ENCODE measurements at regions of chr1 and their contacts with region 1.

Region 1: DNA sequence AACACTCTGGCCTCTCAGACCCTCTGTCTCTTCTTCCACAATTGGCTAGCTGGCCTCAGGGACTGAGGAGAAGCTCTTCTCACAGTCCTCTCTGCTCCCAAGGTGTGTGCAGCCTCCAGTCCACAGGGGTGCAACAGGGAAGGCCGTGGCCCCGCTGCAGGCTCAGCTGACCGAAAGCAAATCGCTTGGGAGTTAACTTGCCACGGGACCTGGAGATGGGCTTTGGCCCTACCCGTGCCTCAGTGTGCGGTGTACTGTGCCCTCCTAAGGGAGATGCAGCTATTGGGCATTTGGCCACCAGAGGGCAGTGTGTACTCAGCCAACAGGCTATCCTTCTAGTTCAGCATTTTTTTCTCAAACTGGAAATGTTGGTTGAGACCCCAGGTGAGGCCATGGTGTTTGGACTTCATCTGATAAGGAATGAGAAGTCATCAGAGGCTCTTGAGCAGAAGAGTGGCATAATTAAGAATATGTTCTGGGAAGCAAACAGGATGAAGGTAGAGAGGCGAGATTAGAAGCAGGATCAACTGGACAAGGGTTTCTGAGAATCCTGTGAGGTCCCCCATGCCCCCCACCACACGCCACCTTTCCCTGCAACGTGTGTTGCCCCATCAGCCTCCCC is 42.5 kb upstream of the TMEM125 start:
- DNase-seq: peak; percentile 90 to 93
- H3K4me3 ChIP-seq: no peak overlapping the region
- H3K27ac ChIP-seq: peak overlapping the region in 1 of 5 donors; percentile 42
- H3K4me1 ChIP-seq: peaks cover 7 to 41% (median 24%) of the 10 kb centered on the region in 4 donors
- H3K27me3 ChIP-seq: no peaks in the 10 kb centered on the region
- CTCF ChIP-seq: peak in 6 of 7 experiments; percentile 57 to 97 (median 90)
- EP300 ChIP-seq: no peak
- POLR2A ChIP-seq: no peak

Region 2: DNA sequence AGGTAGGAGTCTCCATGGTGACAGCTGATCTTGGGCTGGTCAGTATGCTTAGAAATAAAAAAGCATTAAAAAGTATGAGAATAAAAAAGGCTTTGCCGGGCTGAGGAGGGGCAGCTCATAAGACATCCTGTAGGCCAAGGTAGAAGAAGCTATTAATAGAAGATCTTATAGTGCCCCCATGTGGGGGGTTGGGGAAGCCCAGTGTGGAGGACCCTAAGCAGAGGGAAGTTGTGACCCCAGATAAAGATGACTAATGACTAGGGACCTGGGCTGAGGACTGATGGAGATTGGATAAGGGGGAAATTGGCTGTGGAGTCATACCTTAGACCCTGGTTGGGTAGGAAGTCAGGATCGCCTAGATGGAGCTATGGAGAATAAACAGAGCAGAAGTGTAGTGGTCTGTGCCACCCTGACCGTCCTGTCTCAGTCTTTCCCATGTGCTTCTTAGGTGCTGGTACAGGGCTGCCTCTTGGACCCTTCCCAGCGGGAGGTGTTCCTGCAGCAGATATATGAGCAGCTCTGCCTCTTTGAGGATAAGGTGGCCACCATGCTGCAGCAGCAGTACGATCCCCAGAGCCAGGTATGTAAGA is 187.5 kb after region 1 on chr1:
- intact Hi-C with region 1: loop called (anchors 10 kb)
- DNase-seq: peak; percentile 67 to 78
- H3K4me3 ChIP-seq: no peak overlapping the region
- H3K27ac ChIP-seq: no peak overlapping the region
- H3K4me1 ChIP-seq: no peaks in the 10 kb centered on the region
- H3K27me3 ChIP-seq: no peaks in the 10 kb centered on the region
- CTCF ChIP-seq: peak in 4 of 7 experiments; percentile 58 to 69 (median 60)
- EP300 ChIP-seq: no peak
- POLR2A ChIP-seq: no peak

Measured in stomach (tissue), 19 donors.